Endothelial cell of umbilical vein (primary cell): ENCODE measurements at regions of chr6 and their contacts with region 1.

Region 1: GRCh38 chr6:84575264-84575663 is 189.1 kb downstream of the TBX18 start:
- DNase-seq: peak; percentile 89
- H3K4me3 ChIP-seq: no peak overlapping the region
- H3K27ac ChIP-seq: peak overlapping the region; percentile 91
- H3K4me1 ChIP-seq: peaks cover 17% of the 10 kb centered on the region
- H3K27me3 ChIP-seq: no peaks in the 10 kb centered on the region
- CTCF ChIP-seq: no peak
- POLR2A ChIP-seq: peak; percentile 61

Region 2: GRCh38 chr6:84371681-84372080 is 203.6 kb before region 1 on chr6:
- CTCF ChIA-PET with region 1: no interaction called
- POLR2A ChIA-PET with region 1: no interaction called
- dilution Hi-C with region 1: no loop called
- intact Hi-C with region 1: no loop called
- DNase-seq: no peak
- H3K4me3 ChIP-seq: no peak overlapping the region
- H3K27ac ChIP-seq: no peak overlapping the region
- H3K4me1 ChIP-seq: no peaks in the 10 kb centered on the region
- H3K27me3 ChIP-seq: peaks cover 2% of the 10 kb centered on the region in 2 experiments
- CTCF ChIP-seq: no peak
- POLR2A ChIP-seq: no peak

Region 3: DNA sequence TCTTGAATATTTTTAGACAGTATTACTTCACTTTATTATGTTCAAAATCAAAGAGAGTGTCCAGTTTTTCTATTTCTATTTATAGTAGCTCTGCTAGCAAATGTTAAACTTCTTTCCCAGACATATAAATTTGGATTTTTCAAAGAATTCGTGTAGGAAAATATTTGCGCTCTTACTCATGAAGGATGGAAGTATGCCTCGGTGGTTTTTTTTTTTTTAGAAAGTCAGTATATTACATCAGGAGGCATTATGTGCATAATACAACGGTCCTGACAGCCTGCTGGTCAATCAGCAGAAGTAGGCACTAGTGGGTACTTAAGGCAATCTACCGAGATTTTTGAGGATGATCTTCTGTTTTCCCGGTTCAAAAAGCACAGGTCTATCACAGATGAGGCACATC is 60.2 kb before region 1 on chr6:
- CTCF ChIA-PET with region 1: no interaction called
- POLR2A ChIA-PET with region 1: no interaction called
- dilution Hi-C with region 1: no loop called
- intact Hi-C with region 1: no loop called
- DNase-seq: no peak
- H3K4me3 ChIP-seq: no peak overlapping the region
- H3K27ac ChIP-seq: no peak overlapping the region
- H3K4me1 ChIP-seq: no peaks in the 10 kb centered on the region
- H3K27me3 ChIP-seq: no peaks in the 10 kb centered on the region
- CTCF ChIP-seq: no peak
- POLR2A ChIP-seq: no peak

Region 4: DNA sequence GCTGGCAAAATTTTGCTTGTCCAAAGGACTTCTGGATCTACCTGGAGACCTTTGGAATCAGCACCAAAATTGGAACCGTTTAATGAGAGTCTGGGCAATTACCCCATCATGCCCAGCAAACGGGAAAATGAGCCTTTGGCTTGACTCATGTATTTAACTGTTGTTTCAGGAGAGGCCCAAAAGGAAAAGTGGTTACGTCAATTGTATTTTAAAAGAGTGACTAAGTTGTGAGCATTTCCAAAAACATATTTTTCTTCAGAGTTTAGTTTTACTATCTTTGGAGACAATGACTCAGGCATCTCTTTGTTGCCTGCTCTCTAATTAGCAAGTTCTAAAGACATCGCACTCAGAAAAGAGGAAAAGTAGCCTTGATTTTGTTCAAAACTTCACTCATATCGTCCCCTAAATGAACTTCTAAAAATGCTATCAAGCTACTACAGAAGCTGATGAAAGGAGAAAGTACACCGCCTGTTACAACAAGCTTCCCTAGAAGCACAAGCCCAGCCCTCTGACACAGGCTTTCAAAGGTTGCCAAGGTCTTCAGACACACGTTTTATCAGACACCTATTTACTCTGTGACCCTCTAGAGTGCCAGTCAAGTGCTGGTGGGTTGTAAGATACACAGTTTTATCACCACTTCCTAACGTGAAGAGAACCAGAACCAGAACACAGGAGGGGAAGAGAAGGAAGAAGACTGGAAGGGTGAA is 42.9 kb after region 1 on chr6:
- CTCF ChIA-PET with region 1: no interaction called
- POLR2A ChIA-PET with region 1: no interaction called
- dilution Hi-C with region 1: no loop called
- intact Hi-C with region 1: loop called (anchors 5 kb)
- DNase-seq: peak; percentile 96
- H3K4me3 ChIP-seq: no peak overlapping the region
- H3K27ac ChIP-seq: peak overlapping the region; percentile 100
- H3K4me1 ChIP-seq: peaks cover 28% of the 10 kb centered on the region
- H3K27me3 ChIP-seq: no peaks in the 10 kb centered on the region
- CTCF ChIP-seq: no peak
- POLR2A ChIP-seq: no peak

Region 5: DNA sequence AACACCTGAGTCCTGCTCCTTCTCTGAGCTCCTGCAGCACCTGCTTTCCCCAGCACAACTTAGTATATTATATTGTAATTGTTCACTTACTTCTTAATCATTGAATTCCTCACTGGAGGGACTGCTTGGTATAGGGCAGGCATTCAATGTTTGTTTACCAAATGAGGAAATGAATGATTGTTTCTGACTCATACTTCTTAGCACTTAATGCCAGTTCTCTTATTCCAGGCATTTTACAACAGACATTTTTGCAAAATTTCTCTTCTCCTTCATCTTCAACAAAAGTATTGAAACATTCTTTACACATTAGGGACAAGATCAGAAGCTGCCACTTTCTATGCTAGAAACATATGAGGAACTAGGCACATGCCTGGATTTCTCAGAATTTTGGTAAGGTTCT is 69.7 kb after region 1 on chr6:
- CTCF ChIA-PET with region 1: interaction called, 3 read pairs
- POLR2A ChIA-PET with region 1: no interaction called
- dilution Hi-C with region 1: no loop called
- intact Hi-C with region 1: loop called (anchors 1 kb)
- DNase-seq: peak; percentile 87
- H3K4me3 ChIP-seq: peak overlapping the region in 1 of 3 experiments; percentile 57
- H3K27ac ChIP-seq: peak overlapping the region; percentile 97
- H3K4me1 ChIP-seq: peaks cover 54% of the 10 kb centered on the region
- H3K27me3 ChIP-seq: no peaks in the 10 kb centered on the region
- CTCF ChIP-seq: no peak
- POLR2A ChIP-seq: no peak

Region 6: GRCh38 chr6:84652356-84653026 is 77.2 kb after region 1 on chr6:
- CTCF ChIA-PET with region 1: no interaction called
- POLR2A ChIA-PET with region 1: no interaction called
- dilution Hi-C with region 1: no loop called
- intact Hi-C with region 1: loop called (anchors 1 kb)
- DNase-seq: peak; percentile 96
- H3K4me3 ChIP-seq: peak overlapping the region in 1 of 3 experiments; percentile 13
- H3K27ac ChIP-seq: peak overlapping the region; percentile 97
- H3K4me1 ChIP-seq: peaks cover 36% of the 10 kb centered on the region
- H3K27me3 ChIP-seq: no peaks in the 10 kb centered on the region
- CTCF ChIP-seq: no peak
- POLR2A ChIP-seq: peak; percentile 56

Region 7: GRCh38 chr6:84667252-84668213 is 92.3 kb after region 1 on chr6:
- CTCF ChIA-PET with region 1: interaction called, 3 read pairs
- POLR2A ChIA-PET with region 1: no interaction called
- dilution Hi-C with region 1: no loop called
- intact Hi-C with region 1: loop called (anchors 2 kb)
- DNase-seq: peak; percentile 88
- H3K4me3 ChIP-seq: no peak overlapping the region
- H3K27ac ChIP-seq: peak overlapping the region; percentile 89
- H3K4me1 ChIP-seq: peaks cover 17% of the 10 kb centered on the region
- H3K27me3 ChIP-seq: no peaks in the 10 kb centered on the region
- CTCF ChIP-seq: no peak
- POLR2A ChIP-seq: no peak

Region 8: DNA sequence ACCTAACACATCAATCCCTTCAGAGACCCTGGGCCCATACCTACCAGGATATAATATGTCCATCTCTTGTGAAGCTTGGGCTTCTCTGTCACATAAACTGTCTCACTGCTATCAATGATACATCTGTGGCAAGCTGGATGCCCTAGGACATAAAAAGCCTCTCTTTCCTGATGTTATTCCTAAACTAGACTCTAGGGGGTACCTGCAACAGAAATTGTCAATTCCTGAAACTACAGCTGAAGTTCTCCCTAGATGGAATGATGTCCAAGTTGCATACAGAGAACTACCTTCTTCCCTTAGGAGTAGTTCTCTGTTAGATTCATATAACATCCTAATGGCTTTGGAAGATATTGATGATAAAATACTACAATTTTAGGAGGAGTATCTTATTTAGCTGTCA is 153.3 kb after region 1 on chr6:
- CTCF ChIA-PET with region 1: interaction called, 3 read pairs
- POLR2A ChIA-PET with region 1: no interaction called
- dilution Hi-C with region 1: no loop called
- intact Hi-C with region 1: loop called (anchors 5 kb)
- DNase-seq: peak; percentile 39
- H3K4me3 ChIP-seq: no peak overlapping the region
- H3K27ac ChIP-seq: no peak overlapping the region
- H3K4me1 ChIP-seq: peaks cover 24% of the 10 kb centered on the region
- H3K27me3 ChIP-seq: no peaks in the 10 kb centered on the region
- CTCF ChIP-seq: peak; percentile 19 to 31
- POLR2A ChIP-seq: no peak